ENCODE measurements at regions of chr1 and their contacts with region 1.

Region 1: DNA sequence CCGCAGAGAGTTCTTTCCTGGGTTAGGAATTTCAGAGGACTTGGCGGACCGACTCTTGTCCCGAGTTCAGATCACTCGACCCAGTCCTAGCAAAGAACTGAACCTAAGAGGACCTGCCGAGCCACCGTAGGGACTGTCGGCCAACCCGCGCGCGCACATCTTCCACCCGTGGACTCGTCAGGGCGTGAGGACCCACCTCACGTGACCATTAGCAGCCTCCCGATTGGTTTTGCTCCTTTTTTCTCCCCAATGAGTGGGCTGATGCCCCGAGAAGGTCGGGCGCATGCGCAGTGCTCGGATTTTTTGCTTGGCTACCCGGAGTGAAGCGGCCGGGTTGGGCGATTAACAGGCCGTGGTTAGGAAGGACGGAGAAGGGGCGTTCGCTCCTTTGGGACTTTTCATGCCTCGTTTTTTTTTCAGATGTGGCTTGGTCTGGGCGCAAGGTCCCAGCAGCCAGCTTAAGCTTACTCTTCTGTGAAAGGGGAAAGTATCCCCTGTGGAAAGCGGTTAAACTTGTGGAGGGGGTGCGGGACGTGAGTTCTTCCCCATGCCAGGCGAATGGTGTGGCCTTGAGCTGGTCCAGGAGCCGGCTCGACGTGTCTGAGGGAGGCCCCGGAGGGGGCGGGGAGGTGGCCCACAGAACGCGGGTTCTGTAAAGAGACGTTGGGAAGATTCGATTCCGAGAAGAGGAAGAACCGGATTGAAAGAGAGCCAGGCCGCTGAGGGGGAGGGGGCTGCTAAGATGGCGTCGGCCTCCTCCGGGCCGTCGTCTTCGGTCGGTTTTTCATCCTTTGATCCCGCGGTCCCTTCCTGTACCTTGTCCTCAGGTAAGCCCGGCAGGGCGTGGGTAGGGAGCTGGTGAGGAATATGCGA is at the start of gene PIP5K1A:
- DNase-seq: peak; percentile 95
- H3K4me3 ChIP-seq: peak within 1 kb of the TSS; percentile 97
- H3K27ac ChIP-seq: peak within 1 kb of the TSS; percentile 94
- H3K27me3 ChIP-seq: no peaks in the 10 kb centered on the region
- CTCF ChIP-seq: no peak
- polyA plus RNA-seq, gene PIP5K1A: 170 and 179 TPM in 2 replicates

Region 2: GRCh38 chr1:151211972-151212705 is 13.6 kb after region 1 on chr1:
- CTCF ChIA-PET with region 1: no interaction called
- POLR2A ChIA-PET with region 1: interaction called, 10 read pairs
- DNase-seq: no peak
- H3K4me3 ChIP-seq: no peak overlapping the region
- H3K27ac ChIP-seq: no peak overlapping the region
- H3K27me3 ChIP-seq: no peaks in the 10 kb centered on the region
- CTCF ChIP-seq: no peak

Region 3: DNA sequence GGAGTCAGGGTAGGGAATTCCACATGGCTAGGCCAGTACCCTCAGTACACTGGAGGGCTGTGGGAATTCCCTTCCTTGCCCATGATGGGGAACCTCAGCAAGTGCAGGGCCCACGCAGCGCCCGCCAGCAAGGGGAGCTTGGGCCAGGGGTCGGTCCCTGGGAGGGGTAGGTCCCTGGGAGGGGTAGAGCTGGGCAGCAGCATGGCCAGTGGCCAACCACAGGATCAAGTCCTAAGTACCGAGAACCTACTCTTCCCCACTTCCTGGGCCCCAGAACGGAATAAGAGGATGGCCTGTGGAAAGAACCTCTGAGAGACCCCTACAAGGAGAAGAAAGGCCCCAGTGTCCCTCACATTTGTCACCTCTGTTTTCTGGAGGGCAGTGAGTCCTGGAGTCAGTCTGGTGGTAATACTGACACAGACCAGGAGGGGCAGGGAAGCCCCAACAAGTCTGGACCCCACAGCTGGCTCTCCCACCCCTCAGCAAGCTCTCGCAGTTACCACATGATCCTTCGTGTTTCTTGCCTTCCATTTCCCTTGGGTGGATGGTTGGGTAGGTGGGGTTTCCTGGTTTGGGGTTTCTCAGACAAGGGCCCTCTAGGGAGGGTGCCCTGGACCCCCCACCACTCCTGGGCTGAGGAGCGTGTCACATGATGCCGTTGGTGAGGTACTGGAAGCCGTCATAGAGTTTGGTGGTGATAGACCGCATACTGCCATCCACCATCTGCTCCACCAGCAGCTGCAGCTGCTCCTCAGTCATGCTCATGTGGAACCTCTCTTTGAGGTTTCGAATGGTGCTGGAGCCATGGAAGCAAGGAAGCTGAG is 93.9 kb after region 1 on chr1:
- CTCF ChIA-PET with region 1: no interaction called
- POLR2A ChIA-PET with region 1: no interaction called
- DNase-seq: no peak
- H3K4me3 ChIP-seq: no peak overlapping the region
- H3K27ac ChIP-seq: no peak overlapping the region
- H3K27me3 ChIP-seq: no peaks in the 10 kb centered on the region
- CTCF ChIP-seq: no peak

Region 4: DNA sequence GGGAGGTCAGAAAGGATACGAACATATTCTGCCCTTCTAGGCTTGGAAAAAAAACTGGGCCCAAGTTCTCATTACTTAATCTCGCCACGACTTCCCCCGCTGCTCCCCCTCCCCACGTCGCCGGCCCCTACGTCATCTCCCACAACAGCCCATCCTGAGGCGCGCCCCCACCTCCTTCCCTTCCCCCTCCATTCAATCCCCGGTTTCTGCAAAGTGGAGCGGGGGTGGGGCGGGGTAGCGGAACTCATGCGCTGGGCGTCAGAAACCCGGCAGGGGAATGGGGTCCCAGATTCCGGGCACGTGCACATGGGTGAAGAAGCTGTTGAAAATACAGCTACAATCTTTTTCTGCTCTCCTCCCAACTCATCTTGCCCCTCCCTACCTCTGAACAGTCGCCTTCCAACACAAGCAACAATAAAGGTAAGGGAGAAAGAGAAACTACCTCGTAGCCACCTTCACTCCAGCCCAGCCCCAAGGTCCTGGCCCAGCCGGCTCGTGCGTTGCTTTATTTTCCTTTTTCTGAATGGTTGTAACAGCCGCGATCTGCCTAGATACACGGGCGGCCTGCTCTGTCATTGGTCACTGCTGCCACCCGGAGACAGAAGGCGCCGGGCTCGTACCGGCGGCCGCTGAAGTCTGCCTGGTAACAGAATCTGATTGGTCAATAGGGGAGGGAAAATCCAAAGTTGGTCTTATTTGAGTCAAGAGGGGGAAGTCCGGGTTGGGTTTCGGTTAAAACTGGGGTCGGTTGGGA is 148.5 kb after region 1 on chr1 and contains the start of gene RFX5:
- CTCF ChIA-PET with region 1: no interaction called
- POLR2A ChIA-PET with region 1: no interaction called
- DNase-seq: peak; percentile 94
- H3K4me3 ChIP-seq: peak within 1 kb of the TSS; percentile 86
- H3K27ac ChIP-seq: peak within 1 kb of the TSS; percentile 96
- H3K27me3 ChIP-seq: no peaks in the 10 kb centered on the region
- CTCF ChIP-seq: no peak
- polyA plus RNA-seq, gene RFX5: 40.9 and 42.7 TPM in 2 replicates

Measured in AG04450 (cell line).